GM10248 (cell line): ENCODE measurements at regions of chr11 and their contacts with region 1.

Region 1: DNA sequence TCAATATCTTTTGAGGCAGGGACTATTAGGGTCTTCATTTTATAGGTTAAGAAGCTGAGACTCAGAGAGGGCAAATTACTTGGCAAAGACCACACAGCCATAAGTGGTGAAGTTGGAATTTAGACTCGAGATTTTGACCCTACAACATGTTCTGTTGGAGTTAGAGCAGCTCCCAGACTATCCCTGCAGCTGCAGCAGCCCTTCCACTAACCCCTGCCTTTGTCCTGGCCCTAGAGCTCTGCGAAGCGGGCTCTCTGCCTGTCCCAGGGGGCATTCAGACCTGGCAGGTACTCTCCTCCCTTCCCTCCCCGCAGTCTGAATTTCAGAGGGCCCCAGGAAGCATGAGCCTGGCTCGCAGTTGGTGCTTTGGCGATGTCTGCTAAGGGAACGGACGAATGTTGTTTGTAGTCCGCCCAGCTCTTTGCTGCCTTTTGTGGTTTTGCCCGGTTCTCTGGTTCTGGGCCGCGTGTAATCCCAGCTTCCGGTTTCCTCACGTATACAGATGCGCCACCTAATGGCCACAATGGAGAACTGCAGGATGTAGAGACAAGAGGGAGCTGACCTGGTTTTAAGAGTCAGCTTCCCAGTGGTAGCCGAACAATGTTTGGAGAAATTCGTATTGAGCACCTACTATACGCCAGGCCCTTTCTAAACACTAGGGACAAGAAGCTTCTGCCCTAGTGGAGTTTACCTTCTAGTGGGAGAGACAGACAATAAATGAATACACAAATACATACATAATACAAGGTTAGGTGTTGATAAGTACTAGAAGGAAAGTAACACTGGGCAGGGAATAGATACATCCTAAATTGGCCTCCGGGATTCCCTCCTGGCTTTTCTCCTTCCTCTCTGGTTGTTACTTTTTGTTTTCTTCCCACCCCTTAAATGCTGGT is 125.2 kb downstream of the ST3GAL4 start:
- DNase-seq: peak; percentile 85
- CTCF ChIP-seq: peak; percentile 92

Region 2: GRCh38 chr11:126284829-126285228 is 195.8 kb before region 1 on chr11:
- CTCF ChIA-PET with region 1: interaction called, 16 read pairs
- POLR2A ChIA-PET with region 1: no interaction called
- DNase-seq: peak; percentile 66
- CTCF ChIP-seq: no peak

Region 3: DNA sequence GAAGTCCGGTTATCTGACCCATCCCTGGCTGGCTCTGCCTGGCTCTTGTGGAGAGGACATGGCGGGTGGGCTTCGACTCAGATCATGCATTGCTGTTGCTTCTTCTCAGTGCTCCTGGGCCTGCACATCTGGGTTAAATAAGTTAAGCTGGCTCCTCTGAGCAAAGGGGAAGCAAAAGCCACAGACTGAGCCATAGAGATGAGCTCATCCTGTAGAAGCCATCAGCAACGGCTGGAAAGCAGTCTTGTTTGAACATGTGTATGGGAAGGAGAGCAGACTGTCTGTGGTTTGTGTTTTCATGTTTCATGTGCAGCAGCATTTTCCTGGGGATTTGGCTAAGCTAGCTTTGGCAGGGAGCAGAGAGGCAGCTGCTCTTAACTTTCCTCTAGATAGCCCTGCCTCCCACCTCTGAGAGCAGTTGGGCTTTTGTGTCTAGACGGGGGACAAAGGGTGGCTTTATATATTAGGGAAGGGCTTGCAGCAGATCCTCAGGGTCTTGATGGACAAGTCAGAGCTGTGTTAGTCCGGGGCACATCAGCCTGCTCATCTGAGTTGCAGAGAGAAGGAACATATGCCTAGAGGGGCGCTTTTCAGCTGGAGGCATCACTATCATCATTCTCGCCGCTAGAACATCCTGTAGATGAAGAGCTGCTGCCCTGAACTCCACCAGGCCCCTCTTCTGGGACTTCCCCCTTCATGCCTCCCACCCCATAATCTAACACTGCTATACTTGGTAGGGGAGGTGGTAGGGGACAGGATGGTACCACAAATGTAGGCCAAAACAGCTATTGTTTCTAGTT is 161.9 kb before region 1 on chr11:
- CTCF ChIA-PET with region 1: interaction called, 16 read pairs
- POLR2A ChIA-PET with region 1: no interaction called
- DNase-seq: peak; percentile 61
- CTCF ChIP-seq: no peak

Region 4: GRCh38 chr11:126431401-126432064 is 49.1 kb before region 1 on chr11:
- CTCF ChIA-PET with region 1: interaction called, 14 read pairs
- POLR2A ChIA-PET with region 1: no interaction called
- DNase-seq: no peak
- CTCF ChIP-seq: no peak

Region 5: DNA sequence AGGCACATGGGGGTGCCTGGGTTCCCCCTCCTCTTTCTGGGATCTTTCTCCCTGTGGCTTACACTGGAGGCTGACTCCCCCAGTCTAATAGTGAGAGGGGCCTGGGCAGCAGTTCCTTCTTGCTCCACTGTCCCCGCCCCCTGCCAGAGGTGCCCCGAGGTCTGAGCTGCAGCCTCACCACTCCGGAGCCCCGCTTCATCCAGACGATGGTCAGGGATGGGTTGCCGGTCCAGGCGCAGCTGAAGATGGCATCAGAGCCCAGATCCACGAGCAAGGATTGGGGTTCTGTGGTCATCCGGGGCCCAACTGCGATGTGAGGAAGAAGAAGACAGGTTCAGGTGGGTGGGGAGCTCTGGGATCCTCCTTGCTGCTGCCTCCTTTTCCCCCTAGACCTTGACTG is 34.1 kb before region 1 on chr11:
- CTCF ChIA-PET with region 1: interaction called, 69 read pairs
- POLR2A ChIA-PET with region 1: interaction called, 4 read pairs
- DNase-seq: no peak
- CTCF ChIP-seq: no peak

Region 6: GRCh38 chr11:126465573-126466188 is 15.0 kb before region 1 on chr11:
- CTCF ChIA-PET with region 1: interaction called, 72 read pairs
- POLR2A ChIA-PET with region 1: no interaction called
- DNase-seq: no peak
- CTCF ChIP-seq: no peak

Region 7: GRCh38 chr11:126523441-126524205 is 43.0 kb after region 1 on chr11:
- CTCF ChIA-PET with region 1: interaction called, 10 read pairs
- POLR2A ChIA-PET with region 1: no interaction called
- DNase-seq: no peak
- CTCF ChIP-seq: no peak